ENCODE measurements at regions of chr10 and their contacts with region 1.

Region 1: DNA sequence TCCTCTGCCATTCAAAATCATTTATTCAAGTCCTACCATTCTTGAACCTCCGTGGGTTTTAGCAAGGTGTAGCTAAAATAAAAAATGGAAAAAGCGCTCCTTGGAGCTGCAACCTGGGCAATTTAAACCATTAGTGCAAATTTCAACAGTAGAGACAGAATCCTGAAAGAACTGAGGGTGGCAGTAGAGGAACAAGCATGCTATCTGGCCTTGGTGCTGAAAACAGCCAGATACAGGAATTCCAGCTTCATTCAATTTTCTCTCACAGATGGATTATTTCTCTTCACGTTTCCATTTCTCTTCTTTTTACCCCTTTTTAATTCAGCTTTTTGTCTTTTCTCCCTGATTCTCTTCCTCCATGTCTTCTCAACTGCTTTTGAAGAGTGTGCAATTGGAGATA is 77.7 kb downstream of the OTUD1 start:
- DNase-seq: no peak
- H3K4me3 ChIP-seq: no peak overlapping the region
- H3K27ac ChIP-seq: no peak overlapping the region
- H3K4me1 ChIP-seq: no peaks in the 10 kb centered on the region
- H3K27me3 ChIP-seq: no peaks in the 10 kb centered on the region
- CTCF ChIP-seq: peak in 2 of 3 experiments; percentile 70 to 71; a peak in 3 of 4 replicates
- EP300 ChIP-seq: no peak
- POLR2A ChIP-seq: no peak
- RAD21 ChIP-seq: peak; percentile 84

Region 2: GRCh38 chr10:23448802-23449570 is 67.5 kb before region 1 on chr10:
- CTCF ChIA-PET with region 1: no interaction called
- POLR2A ChIA-PET with region 1: no interaction called
- DNase-seq: no peak
- H3K4me3 ChIP-seq: no peak overlapping the region
- H3K27ac ChIP-seq: no peak overlapping the region
- H3K4me1 ChIP-seq: no peaks in the 10 kb centered on the region
- H3K27me3 ChIP-seq: no peaks in the 10 kb centered on the region
- CTCF ChIP-seq: no peak
- EP300 ChIP-seq: no peak
- POLR2A ChIP-seq: no peak
- RAD21 ChIP-seq: no peak

Region 3: DNA sequence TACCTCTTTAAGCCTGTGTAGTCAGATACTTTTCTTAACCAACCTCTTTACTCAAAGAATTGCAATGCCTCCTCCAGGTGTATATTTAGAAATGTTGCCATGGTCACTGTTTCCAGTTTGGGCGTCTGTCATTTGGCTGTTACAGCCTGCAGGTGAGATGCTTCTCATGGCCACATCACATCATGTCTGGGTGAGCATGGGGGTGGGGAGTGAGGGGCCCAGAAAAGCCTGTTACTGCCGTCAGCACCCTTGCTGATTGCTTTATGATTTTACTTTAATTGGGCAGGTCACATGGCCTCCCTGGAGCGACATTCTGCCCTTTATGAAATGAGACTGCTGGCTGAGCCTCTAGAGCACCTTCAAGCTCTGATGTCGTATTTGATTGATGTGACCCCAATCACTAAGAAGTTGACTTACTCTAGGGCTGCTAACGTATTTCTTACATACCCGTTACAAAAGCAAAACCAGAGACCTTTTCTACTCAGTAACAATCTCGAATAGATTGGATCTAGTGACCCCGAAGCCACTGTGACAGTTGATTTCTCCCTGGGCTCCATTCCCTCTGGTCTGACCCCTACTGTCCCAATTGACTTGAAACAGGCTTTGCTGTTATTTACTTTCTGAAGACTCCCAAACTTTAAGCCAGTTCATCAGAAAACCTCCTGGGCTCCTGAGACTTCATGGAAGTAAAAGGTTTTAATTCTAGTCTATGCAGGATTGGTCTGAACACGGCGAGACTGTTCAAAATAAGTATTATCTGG is 17.0 kb before region 1 on chr10:
- CTCF ChIA-PET with region 1: interaction called, 15 read pairs
- POLR2A ChIA-PET with region 1: no interaction called
- DNase-seq: no peak
- H3K4me3 ChIP-seq: no peak overlapping the region
- H3K27ac ChIP-seq: no peak overlapping the region
- H3K4me1 ChIP-seq: peaks cover 0 to 2% (median 0%) of the 10 kb centered on the region in 4 experiments; a peak in 1 of 7 replicates
- H3K27me3 ChIP-seq: no peaks in the 10 kb centered on the region
- CTCF ChIP-seq: peak in 2 of 3 experiments; percentile 9 to 29; a peak in 3 of 4 replicates
- EP300 ChIP-seq: no peak
- POLR2A ChIP-seq: no peak
- RAD21 ChIP-seq: peak; percentile 21 to 40; a peak in 3 of 4 replicates

Region 4: DNA sequence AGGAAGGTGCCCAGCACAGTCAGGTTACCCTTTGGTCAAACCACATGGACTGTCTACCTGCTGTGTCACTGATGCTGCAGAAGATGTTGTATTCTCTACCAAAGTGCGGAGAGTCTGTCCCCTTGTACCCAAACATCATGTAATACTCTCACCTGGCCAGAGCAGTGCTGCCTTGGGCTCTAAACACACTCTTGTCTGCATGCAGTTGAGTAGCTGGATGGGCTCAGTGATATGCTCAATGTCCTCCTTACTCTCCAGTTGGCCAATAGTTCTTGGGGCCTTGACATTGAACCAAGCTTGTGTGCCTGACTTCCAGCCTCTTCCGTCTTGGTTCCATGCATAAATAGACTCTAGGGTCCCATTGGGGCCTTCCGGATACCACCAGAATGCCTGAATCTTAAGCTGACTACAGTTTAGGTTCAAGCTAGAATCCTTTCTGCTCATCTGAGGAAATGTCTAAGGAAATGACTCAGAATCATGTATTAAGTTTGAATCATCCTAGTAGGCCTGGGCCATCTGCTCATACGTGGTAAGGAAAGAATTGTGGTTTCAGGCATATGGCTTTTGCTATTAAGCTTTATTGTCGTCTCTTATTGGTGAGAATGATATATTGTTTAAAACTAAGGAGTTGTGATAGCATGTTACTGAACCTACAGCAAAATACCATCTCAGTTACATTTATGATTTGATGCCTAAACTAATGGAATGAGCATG is 40.4 kb after region 1 on chr10:
- CTCF ChIA-PET with region 1: no interaction called
- POLR2A ChIA-PET with region 1: no interaction called
- DNase-seq: no peak
- H3K4me3 ChIP-seq: no peak overlapping the region
- H3K27ac ChIP-seq: no peak overlapping the region
- H3K4me1 ChIP-seq: no peaks in the 10 kb centered on the region
- H3K27me3 ChIP-seq: no peaks in the 10 kb centered on the region
- CTCF ChIP-seq: no peak
- EP300 ChIP-seq: no peak
- POLR2A ChIP-seq: no peak
- RAD21 ChIP-seq: no peak

Region 5: DNA sequence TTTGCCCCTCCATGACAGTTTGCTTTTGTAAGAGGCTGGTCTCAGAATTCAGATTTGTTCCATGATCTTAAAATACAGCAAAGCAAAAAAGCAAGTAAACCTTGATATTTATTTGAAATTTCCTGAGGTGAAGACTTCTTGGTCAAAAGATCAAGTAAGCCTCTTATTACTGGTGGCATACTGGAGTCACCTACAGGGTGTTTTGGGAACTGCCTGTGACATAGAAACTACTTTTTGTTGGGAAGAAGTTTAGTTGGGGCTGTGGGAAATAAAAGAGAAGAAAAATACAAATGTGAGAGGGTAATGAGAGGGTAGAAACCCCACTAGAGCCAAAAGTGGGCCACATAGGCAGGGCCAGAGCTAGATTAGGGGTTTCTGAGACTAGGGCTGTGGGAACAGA is 140.2 kb after region 1 on chr10:
- CTCF ChIA-PET with region 1: interaction called, 23 read pairs
- POLR2A ChIA-PET with region 1: no interaction called
- DNase-seq: no peak
- H3K4me3 ChIP-seq: no peak overlapping the region
- H3K27ac ChIP-seq: no peak overlapping the region
- H3K4me1 ChIP-seq: no peaks in the 10 kb centered on the region
- H3K27me3 ChIP-seq: no peaks in the 10 kb centered on the region
- CTCF ChIP-seq: peak in 2 of 3 experiments; percentile 60 to 65; a peak in 3 of 4 replicates
- EP300 ChIP-seq: no peak
- POLR2A ChIP-seq: no peak
- RAD21 ChIP-seq: peak; percentile 71 to 79